GM12878 (cell line): ENCODE measurements at regions of chr10 and their contacts with region 1.

Region 1: GRCh38 chr10:69092959-69093850 is 5.3 kb downstream of the SRGN start:
- DNase-seq: peak; percentile 69
- ATAC-seq: peak; percentile 43
- H3K4me3 ChIP-seq: peak overlapping the region; percentile 72
- H3K27ac ChIP-seq: peak overlapping the region; percentile 97
- H3K4me1 ChIP-seq: no peaks in the 10 kb centered on the region
- H3K27me3 ChIP-seq: no peaks in the 10 kb centered on the region
- CTCF ChIP-seq: peak; percentile 53 to 68 (median 60); a peak in 5 of 6 replicates
- EP300 ChIP-seq: no peak
- POLR2A ChIP-seq: no peak
- RAD21 ChIP-seq: peak; percentile 94

Region 2: GRCh38 chr10:68938119-68938518 is 155.1 kb before region 1 on chr10:
- CTCF ChIA-PET with region 1: no interaction called
- POLR2A ChIA-PET with region 1: no interaction called
- RAD21 ChIA-PET with region 1: no interaction called
- SMC1A ChIA-PET with region 1: no interaction called
- in situ Hi-C with region 1: no loop called
- intact Hi-C with region 1: no loop called
- DNase-seq: no peak
- ATAC-seq: no peak
- H3K4me3 ChIP-seq: no peak overlapping the region
- H3K27ac ChIP-seq: no peak overlapping the region
- H3K4me1 ChIP-seq: no peaks in the 10 kb centered on the region
- H3K27me3 ChIP-seq: no peaks in the 10 kb centered on the region
- CTCF ChIP-seq: no peak
- EP300 ChIP-seq: no peak
- POLR2A ChIP-seq: no peak
- RAD21 ChIP-seq: no peak

Region 3: DNA sequence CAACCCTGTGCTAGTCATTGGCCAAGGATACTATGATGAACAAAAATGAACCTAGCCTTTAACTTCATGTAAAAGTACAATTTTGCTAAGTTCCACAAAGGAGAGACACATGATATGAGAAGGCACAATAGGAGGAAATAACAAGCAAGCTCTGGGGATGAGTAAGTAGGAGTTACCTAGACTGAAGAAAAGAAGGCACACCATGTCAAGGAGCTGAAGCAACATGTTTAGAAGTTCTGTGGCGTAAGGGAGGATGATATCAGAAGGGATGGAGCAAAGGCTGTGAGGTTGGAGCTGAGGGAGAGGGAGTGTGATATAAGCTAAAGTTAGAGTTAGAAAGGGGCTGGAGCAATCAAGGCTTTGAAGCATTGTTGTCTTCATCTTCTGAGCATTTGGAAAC is 79.0 kb before region 1 on chr10:
- CTCF ChIA-PET with region 1: interaction called, 272 read pairs
- POLR2A ChIA-PET with region 1: interaction called, 10 read pairs
- RAD21 ChIA-PET with region 1: interaction called, 252 read pairs
- SMC1A ChIA-PET with region 1: interaction called, 269 read pairs
- in situ Hi-C with region 1: loop called (anchors 10 kb)
- intact Hi-C with region 1: no loop called
- DNase-seq: no peak
- ATAC-seq: no peak
- H3K4me3 ChIP-seq: no peak overlapping the region
- H3K27ac ChIP-seq: no peak overlapping the region
- H3K4me1 ChIP-seq: no peaks in the 10 kb centered on the region
- H3K27me3 ChIP-seq: no peaks in the 10 kb centered on the region
- CTCF ChIP-seq: no peak
- EP300 ChIP-seq: no peak
- POLR2A ChIP-seq: no peak
- RAD21 ChIP-seq: no peak

Region 4: GRCh38 chr10:69051303-69051702 is 41.9 kb before region 1 on chr10:
- CTCF ChIA-PET with region 1: interaction called, 71 read pairs
- POLR2A ChIA-PET with region 1: interaction called, 312 read pairs
- RAD21 ChIA-PET with region 1: interaction called, 544 read pairs
- SMC1A ChIA-PET with region 1: interaction called, 355 read pairs
- in situ Hi-C with region 1: no loop called
- intact Hi-C with region 1: loop called (anchors 1 kb)
- DNase-seq: no peak
- ATAC-seq: peak; percentile 64
- H3K4me3 ChIP-seq: no peak overlapping the region
- H3K27ac ChIP-seq: peak overlapping the region; percentile 85
- H3K4me1 ChIP-seq: peaks cover 89% of the 10 kb centered on the region
- H3K27me3 ChIP-seq: no peaks in the 10 kb centered on the region
- CTCF ChIP-seq: no peak
- EP300 ChIP-seq: peak in 1 of 2 experiments; percentile 87; a peak in 1 of 4 replicates
- POLR2A ChIP-seq: no peak
- RAD21 ChIP-seq: no peak

Region 5: GRCh38 chr10:69123747-69124562 is 30.8 kb after region 1 on chr10 and contains the start of gene VPS26A:
- CTCF ChIA-PET with region 1: interaction called, 14 read pairs
- POLR2A ChIA-PET with region 1: interaction called, 21 read pairs
- RAD21 ChIA-PET with region 1: interaction called, 8 read pairs
- SMC1A ChIA-PET with region 1: interaction called, 19 read pairs
- in situ Hi-C with region 1: no loop called
- intact Hi-C with region 1: no loop called
- DNase-seq: peak; percentile 87
- ATAC-seq: peak; percentile 93
- H3K4me3 ChIP-seq: peak within 1 kb of the TSS; percentile 88
- H3K27ac ChIP-seq: peak within 1 kb of the TSS; percentile 86
- H3K4me1 ChIP-seq: peaks cover 4% of the 10 kb centered on the region; the same call in 1 of the 2 replicates
- H3K27me3 ChIP-seq: no peaks in the 10 kb centered on the region
- CTCF ChIP-seq: peak; percentile 58 to 78 (median 60); a peak in 5 of 6 replicates
- EP300 ChIP-seq: no peak
- POLR2A ChIP-seq: peak; percentile 88
- RAD21 ChIP-seq: 0 out of 2 replicates have a peak, but pooled peaks have one; percentile 3
- polyA plus RNA-seq, gene VPS26A: 21.3 to 30.9 TPM

Region 6: DNA sequence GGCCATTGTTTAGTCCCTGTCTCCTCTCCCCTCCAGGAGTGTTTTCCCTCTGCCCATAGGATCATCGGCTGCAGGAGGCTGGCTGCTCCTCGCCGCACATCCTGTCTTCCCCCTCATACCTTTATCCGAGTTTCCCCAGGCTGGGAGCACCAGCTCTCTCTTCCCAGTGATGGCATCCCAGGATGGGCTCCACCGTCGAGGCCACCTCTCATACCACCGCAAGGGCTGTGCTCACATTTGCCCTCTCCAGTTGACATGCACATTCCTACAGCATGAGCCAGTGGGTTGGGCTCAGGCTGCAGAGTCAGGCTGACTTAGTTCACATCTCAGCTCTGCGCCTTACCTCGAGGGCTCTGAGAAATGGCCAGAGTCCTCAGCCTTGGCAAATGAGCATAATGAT is 139.0 kb after region 1 on chr10:
- CTCF ChIA-PET with region 1: interaction called, 4 read pairs
- POLR2A ChIA-PET with region 1: interaction called, 5 read pairs
- RAD21 ChIA-PET with region 1: interaction called, 8 read pairs
- SMC1A ChIA-PET with region 1: interaction called, 15 read pairs
- in situ Hi-C with region 1: no loop called
- intact Hi-C with region 1: no loop called
- DNase-seq: no peak
- ATAC-seq: no peak
- H3K4me3 ChIP-seq: no peak overlapping the region
- H3K27ac ChIP-seq: no peak overlapping the region
- H3K4me1 ChIP-seq: peaks cover 21% of the 10 kb centered on the region
- H3K27me3 ChIP-seq: no peaks in the 10 kb centered on the region
- CTCF ChIP-seq: no peak
- EP300 ChIP-seq: no peak
- POLR2A ChIP-seq: no peak
- RAD21 ChIP-seq: no peak